HEK293 (cell line): ENCODE measurements at regions of chr15 and their contacts with region 1.

Region 1: GRCh38 chr15:40421246-40422157 is 15.9 kb downstream of the IVD start:
- H3K4me3 ChIP-seq: no peak overlapping the region
- H3K27ac ChIP-seq: no peak overlapping the region
- H3K4me1 ChIP-seq: no peaks in the 10 kb centered on the region; the same call in 1 of the 2 replicates
- CTCF ChIP-seq: peak; percentile 72; the same call in 1 of the 2 replicates

Region 2: DNA sequence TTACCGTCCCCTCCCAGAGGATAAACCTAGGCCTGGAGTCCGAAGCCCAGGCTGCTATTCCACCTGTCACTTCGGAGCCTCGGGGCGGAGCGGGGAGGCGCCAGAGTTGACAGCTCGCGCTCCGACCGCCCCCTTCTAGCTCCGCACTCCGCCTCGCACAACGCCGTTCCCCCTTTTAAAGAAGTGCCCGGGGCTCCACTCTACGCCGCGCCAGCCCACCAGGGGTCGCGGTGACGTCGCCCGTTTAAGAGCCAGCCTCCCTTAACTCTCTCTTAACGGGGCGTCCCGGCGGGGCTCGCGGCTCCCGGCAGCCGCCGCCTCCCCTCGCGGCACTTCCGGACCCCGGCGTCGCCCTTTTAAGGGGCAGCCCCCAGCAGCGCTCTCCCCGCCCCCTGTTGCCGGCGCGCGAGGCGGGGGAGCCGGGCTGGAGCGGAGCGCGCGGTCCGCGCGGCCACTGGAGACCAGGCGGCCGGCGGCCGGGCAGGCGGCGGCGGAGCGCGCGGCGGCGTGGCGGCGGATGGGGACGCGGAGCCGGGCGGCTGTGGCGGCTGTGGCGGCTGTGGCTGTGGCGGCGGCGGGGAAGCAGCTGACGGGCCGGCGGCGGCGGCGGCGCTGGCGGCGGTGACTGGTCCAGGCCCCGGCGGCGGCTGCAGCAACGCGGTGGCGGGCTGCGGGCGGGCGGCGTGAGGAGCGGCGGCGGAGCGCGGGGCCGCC is 98.1 kb before region 1 on chr15 and contains the start of gene INAFM2:
- CTCF ChIA-PET with region 1: interaction called, 11 read pairs
- POLR2A ChIA-PET with region 1: interaction called, 8 read pairs
- H3K4me3 ChIP-seq: peak within 1 kb of the TSS; percentile 70
- H3K27ac ChIP-seq: peak within 1 kb of the TSS; percentile 81; the same call in 1 of the 2 replicates
- H3K4me1 ChIP-seq: peaks cover 13% of the 10 kb centered on the region; the same call in 1 of the 2 replicates
- CTCF ChIP-seq: peak; percentile 89

Region 3: GRCh38 chr15:40493089-40493840 is 71.8 kb after region 1 on chr15:
- CTCF ChIA-PET with region 1: no interaction called
- POLR2A ChIA-PET with region 1: no interaction called
- H3K4me3 ChIP-seq: no peak overlapping the region
- H3K27ac ChIP-seq: no peak overlapping the region
- H3K4me1 ChIP-seq: no peaks in the 10 kb centered on the region
- CTCF ChIP-seq: no peak